ENCODE measurements at regions of chr12 and their contacts with region 1.

Region 1: GRCh38 chr12:42507081-42507480 is 82.5 kb downstream of the PRICKLE1 start:
- DNase-seq: no peak
- ATAC-seq: no peak
- H3K4me3 ChIP-seq: no peak overlapping the region
- H3K4me3 Mint-ChIP-seq: no peak overlapping the region
- H3K27ac ChIP-seq: no peak overlapping the region
- H3K27ac Mint-ChIP-seq: no peak overlapping the region
- H3K4me1 ChIP-seq: no peaks in the 10 kb centered on the region
- H3K4me1 Mint-ChIP-seq: no peaks in the 10 kb centered on the region
- H3K27me3 ChIP-seq: no peaks in the 10 kb centered on the region
- H3K27me3 Mint-ChIP-seq: peaks cover 4 to 13% of the 10 kb centered on the region in 2 donors

Region 2: DNA sequence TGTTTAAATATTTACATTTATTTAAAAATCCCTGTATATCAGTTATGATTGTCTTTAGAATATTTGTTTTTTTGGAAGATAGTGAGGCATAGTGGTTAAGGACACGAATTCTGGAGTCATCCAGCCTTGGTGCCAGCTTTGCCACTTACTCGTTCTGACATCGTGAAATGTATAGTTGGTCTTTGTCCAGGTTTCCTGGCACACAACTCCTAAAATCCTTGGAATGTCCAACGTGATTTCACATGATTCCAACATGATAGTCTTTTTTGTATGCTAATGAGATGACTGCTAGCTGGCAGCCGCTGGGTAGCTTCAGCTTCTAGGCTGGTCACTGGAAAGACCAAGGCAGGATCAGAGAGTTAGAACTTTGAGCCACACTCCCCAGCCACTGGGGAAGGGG is 17.6 kb after region 1 on chr12:
- CTCF ChIA-PET with region 1: interaction called in 1 of 2 experiments, 15 read pairs
- POLR2A ChIA-PET with region 1: no interaction called
- DNase-seq: no peak
- ATAC-seq: no peak
- H3K4me3 ChIP-seq: no peak overlapping the region
- H3K4me3 Mint-ChIP-seq: no peak overlapping the region
- H3K27ac ChIP-seq: no peak overlapping the region
- H3K27ac Mint-ChIP-seq: no peak overlapping the region
- H3K4me1 ChIP-seq: no peaks in the 10 kb centered on the region
- H3K4me1 Mint-ChIP-seq: no peaks in the 10 kb centered on the region
- H3K27me3 ChIP-seq: peaks cover 0 to under 1% of the 10 kb centered on the region in 2 experiments
- H3K27me3 Mint-ChIP-seq: peaks cover 2 to 10% of the 10 kb centered on the region in 2 donors

Region 3: DNA sequence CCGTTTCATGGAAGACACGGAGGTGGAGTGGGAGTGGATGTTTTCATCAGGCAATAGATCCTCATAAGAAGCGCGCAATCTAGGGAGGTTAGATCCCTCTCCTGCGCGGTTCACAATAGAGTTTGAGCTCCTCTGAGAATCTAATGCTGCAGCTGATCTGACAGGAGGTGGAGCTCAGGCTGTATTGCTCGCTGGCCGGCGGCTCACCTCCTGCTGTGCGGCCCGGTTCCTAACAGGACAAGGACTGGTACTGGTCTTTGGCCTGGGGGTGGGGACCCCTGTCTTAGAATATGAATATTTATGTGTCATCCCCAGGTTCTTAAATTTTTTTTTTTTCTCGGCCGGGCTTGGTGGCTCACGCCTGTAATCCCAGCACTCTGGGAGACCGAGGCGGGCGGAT is 45.7 kb after region 1 on chr12:
- CTCF ChIA-PET with region 1: no interaction called
- POLR2A ChIA-PET with region 1: interaction called in 1 of 2 experiments, 12 read pairs
- DNase-seq: no peak
- ATAC-seq: no peak
- H3K4me3 ChIP-seq: no peak overlapping the region
- H3K4me3 Mint-ChIP-seq: no peak overlapping the region
- H3K27ac ChIP-seq: no peak overlapping the region
- H3K27ac Mint-ChIP-seq: no peak overlapping the region
- H3K4me1 ChIP-seq: no peaks in the 10 kb centered on the region
- H3K4me1 Mint-ChIP-seq: no peaks in the 10 kb centered on the region
- H3K27me3 ChIP-seq: peaks cover 0 to 2% of the 10 kb centered on the region in 2 experiments
- H3K27me3 Mint-ChIP-seq: peaks cover 13 to 23% of the 10 kb centered on the region in 2 donors